Gastrocnemius medialis (tissue), 4 donors: ENCODE measurements at regions of chr4 and their contacts with region 1.

Region 1: GRCh38 chr4:174222266-174222872 is 61.1 kb downstream of the FBXO8 start:
- DNase-seq: no peak
- ATAC-seq: no peak
- H3K4me3 ChIP-seq: no peak overlapping the region
- H3K27ac ChIP-seq: no peak overlapping the region
- H3K4me1 ChIP-seq: peaks cover 4 to 8% of the 10 kb centered on the region in 2 donors
- H3K27me3 ChIP-seq: peaks cover 12 to 13% (median 12%) of the 10 kb centered on the region in 3 donors
- CTCF ChIP-seq: peak in 3 of 5 experiments; percentile 13 to 60 (median 52)
- POLR2A ChIP-seq: no peak

Region 2: DNA sequence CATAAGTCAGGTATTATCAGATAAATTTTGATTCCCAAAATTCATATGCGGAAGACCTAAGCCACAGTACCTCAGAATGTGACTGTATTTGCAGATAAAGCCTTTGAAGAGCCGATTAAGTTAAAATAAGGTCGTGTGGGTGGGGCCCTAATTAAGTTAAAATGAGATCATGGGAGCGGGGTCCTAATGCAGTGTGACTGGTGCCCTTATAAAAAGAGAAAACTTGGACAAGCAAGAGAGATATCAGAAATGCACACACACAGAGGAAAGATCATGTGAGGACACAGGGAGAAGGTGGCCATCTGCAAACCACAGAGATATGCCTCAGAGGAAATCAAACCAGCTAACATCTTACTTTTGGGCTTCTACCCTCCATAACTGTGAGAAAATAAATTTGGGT is 175.0 kb before region 1 on chr4:
- in situ Hi-C with region 1: no loop called
- intact Hi-C with region 1: no loop called
- DNase-seq: no peak
- ATAC-seq: no peak
- H3K4me3 ChIP-seq: no peak overlapping the region
- H3K27ac ChIP-seq: no peak overlapping the region
- H3K4me1 ChIP-seq: no peaks in the 10 kb centered on the region
- H3K27me3 ChIP-seq: no peaks in the 10 kb centered on the region
- CTCF ChIP-seq: no peak
- POLR2A ChIP-seq: no peak

Region 3: DNA sequence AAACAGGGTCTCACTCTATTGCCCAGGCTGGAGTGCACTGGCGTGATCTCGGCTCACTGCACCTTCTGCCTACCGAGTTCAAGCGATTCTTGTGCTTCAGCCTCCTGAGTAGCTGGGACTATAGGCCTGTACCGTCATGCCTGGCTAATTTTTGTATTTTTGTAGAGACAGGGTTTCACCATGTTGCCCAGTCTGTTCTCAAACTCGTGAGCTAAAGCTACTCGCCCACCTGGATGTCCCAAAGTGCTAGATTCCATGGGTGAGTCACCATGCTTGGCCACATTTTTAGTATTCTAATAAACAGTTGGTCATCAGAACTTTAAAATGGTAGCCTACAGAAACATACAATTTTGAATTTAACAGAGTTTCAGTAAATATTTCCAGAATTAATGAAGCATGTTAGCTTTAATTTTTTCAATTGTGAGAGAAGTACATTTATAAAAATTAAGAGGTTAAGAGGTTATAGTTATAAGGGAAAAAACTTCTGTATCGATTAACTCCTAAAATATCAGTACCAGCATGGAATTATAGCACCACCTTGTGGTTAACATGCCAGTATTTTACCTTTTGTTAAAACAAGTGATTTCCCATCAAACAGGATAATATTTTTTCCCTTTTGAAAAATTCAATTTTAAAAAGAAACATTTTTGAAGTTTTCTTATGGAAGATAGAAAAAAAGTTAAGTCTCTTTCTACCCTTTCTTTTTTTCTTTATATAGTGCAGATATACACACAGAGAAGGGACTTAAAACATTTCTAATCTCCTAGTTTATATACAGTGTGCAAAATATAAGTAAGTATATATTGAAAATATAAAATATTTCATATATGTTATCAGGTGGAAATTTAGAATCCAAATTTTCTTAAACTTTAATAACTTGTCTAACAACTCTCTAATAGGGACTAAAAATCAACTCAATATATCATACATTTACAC is 96.7 kb after region 1 on chr4:
- in situ Hi-C with region 1: loop called in 1 of 4 experiments (anchors 10 kb)
- intact Hi-C with region 1: loop called (anchors 2 kb)
- DNase-seq: no peak
- ATAC-seq: no peak
- H3K4me3 ChIP-seq: no peak overlapping the region
- H3K27ac ChIP-seq: no peak overlapping the region
- H3K4me1 ChIP-seq: peaks cover 0 to 6% of the 10 kb centered on the region in 2 donors
- H3K27me3 ChIP-seq: no peaks in the 10 kb centered on the region
- CTCF ChIP-seq: peak in 4 of 5 experiments; percentile 23 to 74 (median 62)
- POLR2A ChIP-seq: no peak